Breast epithelium (tissue), 4 donors: ENCODE measurements at regions of chr10 and their contacts with region 1.

Region 1: DNA sequence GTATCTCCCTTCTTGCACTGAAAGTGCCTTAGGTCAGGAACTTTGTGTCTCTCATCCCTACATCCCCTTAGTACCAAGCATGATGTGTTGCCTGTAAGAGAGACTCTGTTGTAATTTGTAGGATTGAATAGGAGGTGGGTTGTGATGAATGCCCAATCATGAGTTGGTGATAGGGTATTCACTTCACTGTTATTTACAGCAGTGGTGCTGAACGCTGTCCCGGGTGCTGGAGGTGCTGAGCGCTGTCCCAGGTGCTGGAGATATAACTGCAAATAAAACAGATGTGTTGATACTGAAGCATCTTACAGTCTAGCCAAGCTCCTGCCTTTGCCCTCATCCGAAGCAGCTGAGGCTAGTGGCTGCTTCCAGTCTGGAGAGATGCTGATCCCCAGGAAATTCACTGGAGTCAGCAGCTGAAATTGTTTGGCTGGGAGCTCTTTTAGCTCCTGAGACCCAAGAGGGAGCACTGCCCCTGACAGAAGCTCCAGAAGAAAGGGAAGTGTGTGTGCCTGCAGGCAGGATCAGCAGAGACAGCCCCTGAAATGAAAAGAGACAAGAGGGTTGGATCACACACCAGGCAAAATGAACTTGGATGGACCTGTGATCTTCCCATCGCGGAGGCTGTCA is 183.4 kb downstream of the SORCS3 start:
- DNase-seq: no peak
- H3K4me3 ChIP-seq: no peak overlapping the region
- H3K27ac ChIP-seq: no peak overlapping the region
- H3K4me1 ChIP-seq: no peaks in the 10 kb centered on the region
- H3K27me3 ChIP-seq: no peaks in the 10 kb centered on the region
- CTCF ChIP-seq: no peak
- POLR2A ChIP-seq: no peak

Region 2: GRCh38 chr10:104842704-104843103 is 18.2 kb after region 1 on chr10:
- intact Hi-C with region 1: loop called (anchors 1 kb)
- DNase-seq: no peak
- H3K4me3 ChIP-seq: no peak overlapping the region
- H3K27ac ChIP-seq: no peak overlapping the region
- H3K4me1 ChIP-seq: no peaks in the 10 kb centered on the region
- H3K27me3 ChIP-seq: no peaks in the 10 kb centered on the region
- CTCF ChIP-seq: no peak
- POLR2A ChIP-seq: no peak

Region 3: GRCh38 chr10:105413997-105414396 is 589.5 kb after region 1 on chr10:
- intact Hi-C with region 1: no loop called
- DNase-seq: no peak
- H3K4me3 ChIP-seq: no peak overlapping the region
- H3K27ac ChIP-seq: no peak overlapping the region
- H3K4me1 ChIP-seq: no peaks in the 10 kb centered on the region
- H3K27me3 ChIP-seq: no peaks in the 10 kb centered on the region
- CTCF ChIP-seq: no peak
- POLR2A ChIP-seq: no peak